ENCODE measurements at regions of chr1 and their contacts with region 1.

Region 1: GRCh38 chr1:168342572-168343280 is 62.0 kb downstream of the TBX19 start:
- DNase-seq: peak; percentile 82
- H3K4me3 Mint-ChIP-seq: no peak overlapping the region
- H3K27ac Mint-ChIP-seq: peak overlapping the region; percentile 80
- H3K4me1 Mint-ChIP-seq: peaks cover 82% of the 10 kb centered on the region
- H3K27me3 Mint-ChIP-seq: no peaks in the 10 kb centered on the region

Region 2: GRCh38 chr1:168178638-168179437 is 163.9 kb before region 1 on chr1 and contains the start of gene TIPRL:
- intact Hi-C with region 1: loop called (anchors 5 kb)
- DNase-seq: peak; percentile 93
- H3K4me3 Mint-ChIP-seq: no peak within 1 kb of the TSS
- H3K27ac Mint-ChIP-seq: no peak within 1 kb of the TSS
- H3K4me1 Mint-ChIP-seq: peaks cover 8% of the 10 kb centered on the region
- H3K27me3 Mint-ChIP-seq: peaks cover 4% of the 10 kb centered on the region
- total RNA-seq, gene TIPRL: 59.9 and 63.4 TPM in 2 replicates

Region 3: GRCh38 chr1:168321945-168322344 is 20.8 kb before region 1 on chr1:
- intact Hi-C with region 1: no loop called
- DNase-seq: no peak
- H3K4me3 Mint-ChIP-seq: no peak overlapping the region
- H3K27ac Mint-ChIP-seq: peak overlapping the region; percentile 8
- H3K4me1 Mint-ChIP-seq: peaks cover 47% of the 10 kb centered on the region
- H3K27me3 Mint-ChIP-seq: no peaks in the 10 kb centered on the region

Region 4: DNA sequence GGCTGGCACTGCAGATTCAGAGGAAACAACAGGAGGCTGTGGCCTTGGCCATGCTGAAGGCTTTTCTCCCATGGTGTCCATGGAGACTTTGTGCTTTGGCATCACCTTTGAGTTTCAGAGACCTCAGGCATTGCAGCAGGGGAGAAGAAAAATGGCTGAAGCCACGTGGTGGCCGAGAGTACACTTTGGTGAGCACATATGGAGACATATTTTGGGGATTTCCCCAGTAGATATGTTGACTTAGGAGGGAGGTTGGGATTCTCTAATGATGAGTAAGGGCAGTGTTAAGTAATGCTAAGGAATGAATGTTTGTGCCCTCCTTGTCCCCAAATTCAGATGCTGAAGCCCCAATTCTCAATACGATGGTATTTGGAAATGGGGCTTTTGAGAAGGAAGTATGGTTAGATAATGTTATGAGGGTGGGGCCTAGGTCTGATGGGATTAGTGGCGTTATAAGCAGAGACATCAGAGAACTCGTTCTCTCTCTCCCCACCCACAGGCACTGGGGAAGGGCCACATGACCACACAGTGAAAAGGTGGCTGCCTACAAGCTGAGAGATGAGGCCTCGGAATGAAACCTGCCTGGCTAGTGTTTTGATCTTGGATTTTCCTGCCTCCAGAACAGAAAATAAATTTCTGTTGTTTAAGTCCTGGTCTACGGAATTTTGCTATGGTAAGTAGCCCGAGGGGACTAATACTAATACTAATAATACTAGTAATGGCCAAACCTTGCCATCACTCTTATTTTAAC is 36.6 kb after region 1 on chr1:
- intact Hi-C with region 1: no loop called
- DNase-seq: no peak
- H3K4me3 Mint-ChIP-seq: no peak overlapping the region
- H3K27ac Mint-ChIP-seq: no peak overlapping the region
- H3K4me1 Mint-ChIP-seq: no peaks in the 10 kb centered on the region
- H3K27me3 Mint-ChIP-seq: no peaks in the 10 kb centered on the region

Region 5: GRCh38 chr1:168396940-168397698 is 54.4 kb after region 1 on chr1:
- intact Hi-C with region 1: no loop called
- DNase-seq: no peak
- H3K4me3 Mint-ChIP-seq: no peak overlapping the region
- H3K27ac Mint-ChIP-seq: no peak overlapping the region
- H3K4me1 Mint-ChIP-seq: peaks cover 46% of the 10 kb centered on the region
- H3K27me3 Mint-ChIP-seq: peaks cover 4% of the 10 kb centered on the region

Region 6: DNA sequence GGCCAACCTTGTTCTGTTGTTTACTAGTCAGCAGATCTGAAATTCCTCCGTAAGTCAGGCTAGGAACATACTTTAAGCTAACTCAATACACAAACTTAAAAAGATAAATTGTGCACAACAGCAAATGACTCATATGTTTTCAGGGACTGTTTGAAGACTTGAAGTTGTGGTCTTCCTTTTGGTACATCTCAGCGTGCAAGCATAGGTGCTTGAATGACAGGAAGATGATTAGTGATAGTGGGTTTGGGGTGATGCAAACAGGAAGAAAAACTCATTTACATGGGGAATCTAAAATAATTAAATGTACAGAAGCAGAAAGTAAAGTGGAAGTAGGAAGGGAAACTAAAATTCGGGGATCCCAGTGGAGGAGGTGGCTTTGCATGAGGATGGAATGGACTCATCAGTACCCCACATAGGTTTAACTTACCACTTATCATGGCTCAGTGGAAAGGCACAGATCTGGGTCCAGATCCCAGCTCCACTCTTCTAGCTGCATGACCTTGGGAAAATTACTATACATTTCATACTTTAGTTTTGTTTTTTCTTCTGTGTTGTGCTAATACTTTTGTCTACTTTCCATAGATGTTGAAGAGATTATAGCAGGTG is 78.8 kb after region 1 on chr1:
- intact Hi-C with region 1: loop called (anchors 1 kb)
- DNase-seq: no peak
- H3K4me3 Mint-ChIP-seq: peak overlapping the region; percentile 15
- H3K27ac Mint-ChIP-seq: peak overlapping the region; percentile 72
- H3K4me1 Mint-ChIP-seq: peaks cover 29% of the 10 kb centered on the region
- H3K27me3 Mint-ChIP-seq: no peaks in the 10 kb centered on the region

Region 7: GRCh38 chr1:168452329-168452728 is 109.6 kb after region 1 on chr1:
- intact Hi-C with region 1: no loop called
- DNase-seq: no peak
- H3K4me3 Mint-ChIP-seq: no peak overlapping the region
- H3K27ac Mint-ChIP-seq: no peak overlapping the region
- H3K4me1 Mint-ChIP-seq: peaks cover 20% of the 10 kb centered on the region
- H3K27me3 Mint-ChIP-seq: no peaks in the 10 kb centered on the region

Region 8: GRCh38 chr1:168466092-168466713 is 123.5 kb after region 1 on chr1:
- intact Hi-C with region 1: loop called (anchors 1 kb)
- DNase-seq: no peak
- H3K4me3 Mint-ChIP-seq: no peak overlapping the region
- H3K27ac Mint-ChIP-seq: peak overlapping the region; percentile 76
- H3K4me1 Mint-ChIP-seq: peaks cover 58% of the 10 kb centered on the region
- H3K27me3 Mint-ChIP-seq: no peaks in the 10 kb centered on the region

Region 9: DNA sequence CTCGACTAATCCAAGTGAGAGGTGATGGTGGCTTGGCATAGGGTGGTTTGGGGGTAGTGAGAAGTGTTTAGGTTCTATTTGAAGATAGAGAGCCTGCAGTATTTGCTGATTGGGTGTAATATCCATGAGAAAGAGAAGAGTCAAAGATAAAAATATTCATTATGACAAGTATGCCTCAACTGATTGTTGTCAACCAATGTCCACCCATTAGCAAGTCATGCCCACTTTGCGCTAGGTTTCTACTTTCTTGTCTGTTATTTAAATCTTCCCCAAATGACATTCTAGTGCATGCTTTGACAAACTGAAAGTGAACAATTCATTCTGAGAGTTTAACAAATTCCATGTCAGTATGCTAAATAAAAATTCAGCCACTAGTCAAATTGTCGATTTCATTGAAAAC is 229.9 kb after region 1 on chr1:
- intact Hi-C with region 1: loop called (anchors 5 kb)
- DNase-seq: no peak
- H3K4me3 Mint-ChIP-seq: no peak overlapping the region
- H3K27ac Mint-ChIP-seq: peak overlapping the region; percentile 2
- H3K4me1 Mint-ChIP-seq: peaks cover 33% of the 10 kb centered on the region
- H3K27me3 Mint-ChIP-seq: peaks cover 9% of the 10 kb centered on the region

Region 10: GRCh38 chr1:169348383-169349036 is 1005.8 kb after region 1 on chr1:
- intact Hi-C with region 1: loop called (anchors 5 kb)
- DNase-seq: no peak
- H3K4me3 Mint-ChIP-seq: no peak overlapping the region
- H3K27ac Mint-ChIP-seq: no peak overlapping the region
- H3K4me1 Mint-ChIP-seq: peaks cover 20% of the 10 kb centered on the region
- H3K27me3 Mint-ChIP-seq: no peaks in the 10 kb centered on the region